WTC11 (cell line): ENCODE measurements at regions of chr7 and their contacts with region 1.

Region 1: GRCh38 chr7:137169282-137169698 is 174.2 kb downstream of the PTN start:
- DNase-seq: peak; percentile 77
- ATAC-seq: peak; percentile 99
- H3K4me3 Mint-ChIP-seq: no peak overlapping the region
- H3K27ac Mint-ChIP-seq: 0 out of 2 replicates have a peak overlapping the region, but pooled peaks have one; percentile 29
- H3K4me1 Mint-ChIP-seq: peaks cover 11% of the 10 kb centered on the region
- H3K27me3 Mint-ChIP-seq: no peaks in the 10 kb centered on the region
- CTCF ChIP-seq: peak; percentile 48; the same call in 1 of the 2 replicates

Region 2: DNA sequence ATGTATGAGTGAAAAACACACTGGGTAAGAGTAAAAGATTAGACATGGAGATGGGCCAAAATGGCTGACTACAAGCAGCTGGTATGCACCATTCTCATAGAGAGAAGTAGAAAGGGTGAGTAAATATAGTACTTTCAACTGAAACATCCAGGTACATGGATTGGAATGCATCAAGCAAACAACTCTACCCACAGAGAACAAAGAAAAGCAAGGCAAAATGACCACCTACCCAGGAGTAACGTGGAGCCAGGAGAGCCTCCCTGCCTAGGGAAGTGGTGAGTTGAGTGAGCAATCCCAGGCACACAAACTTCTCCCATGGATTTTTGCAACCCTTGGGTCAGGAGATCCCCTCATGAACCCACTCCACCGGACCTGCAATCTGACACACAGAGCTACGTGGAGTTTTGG is 38.5 kb before region 1 on chr7:
- CTCF ChIA-PET with region 1: no interaction called
- POLR2A ChIA-PET with region 1: no interaction called
- DNase-seq: no peak
- ATAC-seq: no peak
- H3K4me3 Mint-ChIP-seq: no peak overlapping the region
- H3K27ac Mint-ChIP-seq: no peak overlapping the region
- H3K4me1 Mint-ChIP-seq: no peaks in the 10 kb centered on the region
- H3K27me3 Mint-ChIP-seq: no peaks in the 10 kb centered on the region
- CTCF ChIP-seq: no peak

Region 3: DNA sequence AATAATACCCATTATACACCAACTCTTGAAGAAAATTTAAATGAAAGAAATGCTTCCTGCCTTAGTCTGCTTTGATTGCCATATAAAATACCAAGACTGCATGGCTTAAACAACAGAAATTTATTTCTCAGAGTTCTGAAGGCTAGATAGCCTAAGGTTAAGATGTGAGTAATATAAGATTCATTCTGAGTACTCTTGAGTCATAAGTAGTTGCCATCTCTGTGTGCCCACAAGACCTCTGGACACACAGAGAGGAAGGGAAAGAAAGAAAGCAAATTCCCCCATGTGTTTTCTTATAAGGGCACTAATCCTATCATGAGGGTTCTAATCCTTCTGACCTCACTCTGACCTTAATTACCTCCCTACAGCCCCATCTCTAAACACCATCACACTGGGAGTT is 26.9 kb before region 1 on chr7:
- CTCF ChIA-PET with region 1: no interaction called
- POLR2A ChIA-PET with region 1: no interaction called
- DNase-seq: no peak
- ATAC-seq: no peak
- H3K4me3 Mint-ChIP-seq: no peak overlapping the region
- H3K27ac Mint-ChIP-seq: no peak overlapping the region
- H3K4me1 Mint-ChIP-seq: peaks cover 4% of the 10 kb centered on the region
- H3K27me3 Mint-ChIP-seq: no peaks in the 10 kb centered on the region
- CTCF ChIP-seq: no peak

Region 4: DNA sequence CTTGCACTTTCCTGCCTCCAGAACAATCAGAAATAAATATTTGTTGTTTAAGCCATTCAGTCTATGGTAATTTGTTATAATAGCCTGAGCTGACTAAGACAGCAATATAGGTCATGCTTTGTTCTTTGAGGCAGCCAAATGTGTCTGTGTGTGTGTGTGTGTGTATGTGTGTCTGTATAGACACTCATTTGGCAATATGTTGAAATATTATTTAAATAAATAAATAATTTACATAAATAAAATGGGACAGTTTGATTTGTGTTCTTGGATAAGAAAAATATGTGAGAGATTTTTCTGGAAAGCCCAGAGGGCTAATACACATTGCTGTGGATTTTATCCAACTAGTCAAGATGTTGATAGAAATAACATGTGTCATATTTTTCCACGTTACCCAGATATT is 34.1 kb after region 1 on chr7:
- CTCF ChIA-PET with region 1: no interaction called
- POLR2A ChIA-PET with region 1: no interaction called
- DNase-seq: no peak
- ATAC-seq: no peak
- H3K4me3 Mint-ChIP-seq: no peak overlapping the region
- H3K27ac Mint-ChIP-seq: no peak overlapping the region
- H3K4me1 Mint-ChIP-seq: no peaks in the 10 kb centered on the region
- H3K27me3 Mint-ChIP-seq: no peaks in the 10 kb centered on the region; the same call in 1 of the 2 replicates
- CTCF ChIP-seq: no peak

Region 5: DNA sequence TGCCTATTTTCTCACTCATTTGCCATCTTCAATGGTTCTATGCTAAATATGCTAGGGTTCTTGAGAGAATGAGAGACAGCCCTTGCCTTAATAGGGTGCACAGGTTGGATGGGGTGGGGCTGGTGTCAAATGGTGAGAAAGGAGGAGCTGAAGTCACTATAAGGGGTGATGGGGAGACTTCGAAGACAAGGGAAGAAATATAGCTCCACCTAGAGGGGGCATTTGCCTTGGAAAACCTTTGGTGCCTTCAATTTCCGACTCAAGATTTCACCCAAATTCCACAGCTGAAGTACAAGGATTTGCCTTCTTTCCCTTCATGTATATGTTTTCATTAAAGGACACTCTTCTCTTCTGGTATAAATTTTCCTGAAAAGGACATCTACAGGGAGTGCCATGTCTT is 168.6 kb after region 1 on chr7:
- CTCF ChIA-PET with region 1: interaction called, 40 read pairs
- POLR2A ChIA-PET with region 1: no interaction called
- DNase-seq: peak; percentile 24
- ATAC-seq: peak; percentile 91
- H3K4me3 Mint-ChIP-seq: no peak overlapping the region
- H3K27ac Mint-ChIP-seq: no peak overlapping the region
- H3K4me1 Mint-ChIP-seq: peaks cover 28% of the 10 kb centered on the region
- H3K27me3 Mint-ChIP-seq: no peaks in the 10 kb centered on the region; the same call in 1 of the 2 replicates
- CTCF ChIP-seq: peak; percentile 31; the same call in 1 of the 2 replicates

Region 6: GRCh38 chr7:137343281-137343841 is 174.1 kb after region 1 on chr7 and contains the start of gene PTN:
- CTCF ChIA-PET with region 1: interaction called, 40 read pairs
- POLR2A ChIA-PET with region 1: no interaction called
- DNase-seq: peak; percentile 62
- ATAC-seq: peak; percentile 92
- H3K4me3 Mint-ChIP-seq: peak within 1 kb of the TSS; percentile 83
- H3K27ac Mint-ChIP-seq: peak within 1 kb of the TSS; percentile 55
- H3K4me1 Mint-ChIP-seq: peaks cover 61% of the 10 kb centered on the region
- H3K27me3 Mint-ChIP-seq: peaks cover 19% of the 10 kb centered on the region
- CTCF ChIP-seq: no peak
- total RNA-seq, gene PTN: 13.7 to 18.9 TPM (median 14.4 TPM) in 3 replicates